Astrocyte of the cerebellum (primary cell): ENCODE measurements at regions of chr3 and their contacts with region 1.

Region 1: GRCh38 chr3:139588450-139588849 is 48.9 kb upstream of the RBP1 start:
- DNase-seq: no peak
- H3K4me3 ChIP-seq: no peak overlapping the region
- CTCF ChIP-seq: no peak

Region 2: DNA sequence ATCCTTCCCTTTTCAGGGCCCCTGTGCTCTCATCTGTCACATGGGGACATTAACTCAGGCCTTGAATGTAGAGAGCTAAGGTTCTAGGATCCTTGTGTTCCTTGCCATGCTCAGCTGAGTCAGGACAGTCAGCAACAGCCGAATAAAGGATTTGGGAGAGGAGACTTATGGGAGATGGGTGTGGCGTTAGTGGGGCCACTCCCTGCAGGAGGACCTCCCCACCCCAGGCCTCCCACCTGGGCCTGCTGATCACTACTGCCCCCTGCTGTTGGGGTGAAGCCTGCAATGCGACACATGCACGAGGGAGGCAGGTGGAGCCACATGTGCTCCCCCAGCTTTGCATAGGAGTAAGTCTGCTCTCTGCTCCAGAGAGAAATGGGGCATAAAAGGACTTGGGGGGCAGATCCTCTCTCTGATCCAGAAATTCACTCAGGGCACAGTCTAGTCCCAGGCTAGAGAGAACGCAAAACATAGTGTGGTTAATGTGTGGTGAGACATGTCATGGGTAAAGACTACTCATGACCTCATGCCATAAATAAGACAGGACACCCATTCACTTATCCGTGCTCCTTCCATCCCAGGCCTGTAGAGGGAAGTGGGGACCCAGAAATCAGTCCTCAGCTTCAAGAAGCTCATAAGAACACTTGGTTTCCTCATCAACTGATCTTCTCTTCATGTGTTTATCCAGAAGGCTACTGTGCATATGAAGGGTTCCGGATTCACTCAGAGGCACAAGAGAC is 68.3 kb before region 1 on chr3:
- in situ Hi-C with region 1: no loop called
- DNase-seq: no peak
- H3K4me3 ChIP-seq: no peak overlapping the region
- CTCF ChIP-seq: peak; percentile 37

Region 3: DNA sequence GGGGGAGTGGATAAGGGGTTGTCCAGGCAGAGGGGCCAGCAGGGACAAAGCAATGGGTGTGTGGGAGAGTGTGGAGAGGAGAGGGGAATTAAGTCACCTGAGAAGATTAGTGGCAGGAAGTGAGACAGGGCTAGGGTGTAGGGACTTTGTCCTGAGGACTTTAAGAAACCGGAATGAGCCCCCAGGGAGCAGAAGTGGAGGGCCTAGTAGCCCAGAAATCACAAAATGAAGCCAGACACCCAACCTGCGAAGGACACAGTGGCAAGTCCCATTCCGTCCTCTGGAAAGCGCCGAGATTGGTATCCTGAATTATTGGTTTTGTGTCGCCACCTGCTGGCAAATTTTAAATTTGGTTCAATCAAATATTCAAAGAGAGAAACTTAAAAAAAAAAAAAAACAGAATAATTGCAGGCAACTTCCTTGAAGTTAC is 1275.1 kb after region 1 on chr3:
- in situ Hi-C with region 1: loop called (anchors 25 kb)
- DNase-seq: peak; percentile 35
- H3K4me3 ChIP-seq: no peak overlapping the region
- CTCF ChIP-seq: peak; percentile 42